ENCODE measurements at regions of chr12 and their contacts with region 1.

Region 1: GRCh38 chr12:14769969-14770495 is 33.2 kb downstream of the WBP11 start:
- DNase-seq: peak; percentile 79
- H3K4me3 Mint-ChIP-seq: peak overlapping the region; percentile 86
- H3K27ac Mint-ChIP-seq: peak overlapping the region; percentile 97
- H3K4me1 Mint-ChIP-seq: peaks cover 61% of the 10 kb centered on the region
- H3K27me3 Mint-ChIP-seq: no peaks in the 10 kb centered on the region

Region 2: DNA sequence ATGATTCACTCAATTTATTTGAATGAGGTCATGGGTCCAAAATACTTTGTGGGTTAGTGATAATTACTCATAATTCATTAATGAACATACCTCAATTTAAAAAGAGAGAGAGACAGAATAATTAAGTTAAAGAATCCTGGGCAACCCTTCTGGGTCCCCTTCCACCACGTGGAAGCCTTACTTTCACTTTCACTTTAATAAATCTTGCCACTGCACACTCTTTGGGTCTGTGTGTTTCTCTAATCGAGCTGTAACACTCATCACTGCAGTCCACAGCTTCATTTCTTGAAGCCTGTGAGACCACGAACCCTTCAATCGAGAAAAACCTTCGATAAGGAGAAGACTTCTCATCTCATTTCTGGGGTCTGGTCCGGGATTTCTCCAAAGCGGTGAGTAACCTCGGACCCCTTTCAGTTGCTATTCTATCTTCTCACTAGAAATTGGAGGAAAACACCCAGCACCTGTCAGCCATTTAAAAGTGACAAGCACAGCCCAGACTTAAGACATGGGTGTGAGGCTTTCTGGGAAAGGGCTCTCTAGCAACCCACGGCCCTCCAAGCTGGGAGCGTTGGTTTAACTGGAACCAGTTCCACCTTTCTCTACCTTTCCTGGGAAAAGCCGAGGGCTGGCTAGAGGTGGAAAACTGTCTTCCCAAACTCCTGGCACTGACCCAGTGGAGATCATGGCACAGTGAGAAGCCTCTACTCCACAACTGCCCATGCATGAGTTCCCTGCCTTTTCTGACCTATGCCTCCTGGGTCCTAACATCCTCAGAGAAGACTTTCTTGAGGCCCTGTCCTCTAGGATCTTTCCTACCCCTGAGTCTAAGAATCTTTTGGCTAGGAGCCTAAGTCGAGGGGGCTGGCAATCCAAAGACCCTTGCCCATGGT is 553.4 kb before region 1 on chr12:
- intact Hi-C with region 1: loop called (anchors 1 kb)
- DNase-seq: no peak
- H3K4me3 Mint-ChIP-seq: peak overlapping the region; percentile 0
- H3K27ac Mint-ChIP-seq: no peak overlapping the region
- H3K4me1 Mint-ChIP-seq: peaks cover 15% of the 10 kb centered on the region
- H3K27me3 Mint-ChIP-seq: no peaks in the 10 kb centered on the region

Region 3: DNA sequence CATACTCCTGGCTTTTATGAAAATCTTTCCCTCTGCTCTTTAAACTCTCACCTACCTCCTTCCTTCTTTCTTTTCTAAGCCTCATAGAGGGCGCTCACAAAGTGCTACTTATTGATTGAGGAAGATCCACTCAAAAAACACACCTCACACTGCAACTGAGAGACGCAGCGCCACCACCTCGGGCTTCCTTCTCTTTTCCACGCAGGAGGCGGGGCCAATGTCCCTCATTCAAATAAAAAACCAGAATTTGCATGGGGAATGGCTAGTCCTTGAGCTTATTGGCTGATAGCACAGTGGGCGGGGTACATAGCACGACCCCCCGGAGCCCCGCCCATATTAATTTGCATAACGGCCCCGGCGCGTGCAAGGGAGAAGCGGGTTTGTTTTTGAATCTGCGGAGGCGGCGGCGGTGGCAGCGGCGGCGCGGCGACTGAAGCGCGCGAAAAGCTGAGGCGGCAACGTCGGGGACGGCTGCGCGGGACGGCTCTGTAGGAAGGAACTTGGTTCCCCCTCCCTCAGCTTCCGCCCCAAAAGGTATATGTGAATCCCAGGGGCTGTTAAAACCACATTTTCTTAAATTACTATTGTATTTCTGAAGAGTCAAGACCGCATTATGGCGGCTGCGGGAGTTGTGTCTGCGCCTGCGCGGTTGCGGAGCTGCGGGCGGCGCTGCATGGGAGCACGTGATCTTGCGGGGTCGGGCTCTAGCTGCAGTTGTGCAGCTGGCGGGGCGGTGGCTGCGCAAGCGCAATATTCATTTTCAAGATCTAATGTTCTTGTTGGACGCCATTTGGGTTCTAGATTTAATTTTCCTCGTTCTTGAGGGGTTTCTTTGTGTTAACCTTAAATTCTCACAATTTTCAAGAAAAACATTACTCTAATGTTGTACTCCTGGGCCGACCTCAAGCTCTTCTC is 404.5 kb before region 1 on chr12 and contains the start of gene ATF7IP:
- intact Hi-C with region 1: loop called (anchors 1 kb)
- DNase-seq: peak; percentile 96
- H3K4me3 Mint-ChIP-seq: peak within 1 kb of the TSS; percentile 85
- H3K27ac Mint-ChIP-seq: peak within 1 kb of the TSS; percentile 98
- H3K4me1 Mint-ChIP-seq: peaks cover 46% of the 10 kb centered on the region
- H3K27me3 Mint-ChIP-seq: no peaks in the 10 kb centered on the region
- total RNA-seq, gene ATF7IP: 66.4 and 71.6 TPM in 2 replicates

Region 4: DNA sequence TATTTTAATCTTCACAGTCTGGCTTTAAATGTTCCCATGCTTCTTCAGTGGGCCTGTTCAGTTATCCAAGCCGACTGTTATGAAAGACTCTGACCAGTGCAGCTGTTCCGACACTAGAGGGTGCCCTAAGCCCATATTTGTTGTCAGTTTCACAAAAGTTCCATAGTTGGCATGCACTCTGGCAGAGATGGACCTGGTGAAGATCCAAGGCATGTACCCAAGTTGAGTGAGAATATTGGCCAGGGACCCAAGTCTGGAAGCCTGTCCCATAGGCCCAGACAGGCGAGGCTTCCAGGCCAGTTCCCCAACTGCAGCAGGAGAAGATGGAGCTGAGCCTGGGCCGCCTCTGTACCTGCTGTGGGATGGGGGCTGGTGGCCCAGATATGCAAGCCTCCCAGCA is 46.3 kb before region 1 on chr12:
- intact Hi-C with region 1: loop called (anchors 1 kb)
- DNase-seq: peak; percentile 31
- H3K4me3 Mint-ChIP-seq: no peak overlapping the region
- H3K27ac Mint-ChIP-seq: no peak overlapping the region
- H3K4me1 Mint-ChIP-seq: no peaks in the 10 kb centered on the region
- H3K27me3 Mint-ChIP-seq: peaks cover 15% of the 10 kb centered on the region

Region 5: GRCh38 chr12:14960548-14961465 is 190.8 kb after region 1 on chr12:
- intact Hi-C with region 1: loop called (anchors 1 kb)
- DNase-seq: peak; percentile 34
- H3K4me3 Mint-ChIP-seq: peak overlapping the region; percentile 97
- H3K27ac Mint-ChIP-seq: peak overlapping the region; percentile 97
- H3K4me1 Mint-ChIP-seq: peaks cover 68% of the 10 kb centered on the region
- H3K27me3 Mint-ChIP-seq: no peaks in the 10 kb centered on the region

Region 6: GRCh38 chr12:15172060-15172822 is 402.2 kb after region 1 on chr12:
- intact Hi-C with region 1: no loop called
- DNase-seq: no peak
- H3K4me3 Mint-ChIP-seq: no peak overlapping the region
- H3K27ac Mint-ChIP-seq: no peak overlapping the region
- H3K4me1 Mint-ChIP-seq: no peaks in the 10 kb centered on the region
- H3K27me3 Mint-ChIP-seq: peaks cover 4% of the 10 kb centered on the region

Region 7: GRCh38 chr12:15789220-15790171 is 1019.5 kb after region 1 on chr12 and contains the start of gene EPS8:
- intact Hi-C with region 1: loop called (anchors 5 kb)
- DNase-seq: peak; percentile 83
- H3K4me3 Mint-ChIP-seq: peak within 1 kb of the TSS; percentile 91
- H3K27ac Mint-ChIP-seq: peak within 1 kb of the TSS; percentile 81
- H3K4me1 Mint-ChIP-seq: peaks cover 19% of the 10 kb centered on the region
- H3K27me3 Mint-ChIP-seq: peaks cover 73% of the 10 kb centered on the region
- total RNA-seq, gene EPS8: 1.9 and 3.1 TPM in 2 replicates